BJ (cell line): ENCODE measurements at regions of chr3 and their contacts with region 1.

Region 1: GRCh38 chr3:36700537-36701248 is 63.7 kb downstream of the DCLK3 start:
- DNase-seq: no peak
- H3K4me3 ChIP-seq: no peak overlapping the region
- H3K27me3 ChIP-seq: no peaks in the 10 kb centered on the region
- CTCF ChIP-seq: peak; percentile 90

Region 2: GRCh38 chr3:35965908-35966307 is 734.8 kb before region 1 on chr3:
- CTCF ChIA-PET with region 1: interaction called, 17 read pairs
- POLR2A ChIA-PET with region 1: interaction called, 14 read pairs
- DNase-seq: no peak
- H3K4me3 ChIP-seq: no peak overlapping the region
- H3K27me3 ChIP-seq: no peaks in the 10 kb centered on the region
- CTCF ChIP-seq: peak; percentile 58

Region 3: DNA sequence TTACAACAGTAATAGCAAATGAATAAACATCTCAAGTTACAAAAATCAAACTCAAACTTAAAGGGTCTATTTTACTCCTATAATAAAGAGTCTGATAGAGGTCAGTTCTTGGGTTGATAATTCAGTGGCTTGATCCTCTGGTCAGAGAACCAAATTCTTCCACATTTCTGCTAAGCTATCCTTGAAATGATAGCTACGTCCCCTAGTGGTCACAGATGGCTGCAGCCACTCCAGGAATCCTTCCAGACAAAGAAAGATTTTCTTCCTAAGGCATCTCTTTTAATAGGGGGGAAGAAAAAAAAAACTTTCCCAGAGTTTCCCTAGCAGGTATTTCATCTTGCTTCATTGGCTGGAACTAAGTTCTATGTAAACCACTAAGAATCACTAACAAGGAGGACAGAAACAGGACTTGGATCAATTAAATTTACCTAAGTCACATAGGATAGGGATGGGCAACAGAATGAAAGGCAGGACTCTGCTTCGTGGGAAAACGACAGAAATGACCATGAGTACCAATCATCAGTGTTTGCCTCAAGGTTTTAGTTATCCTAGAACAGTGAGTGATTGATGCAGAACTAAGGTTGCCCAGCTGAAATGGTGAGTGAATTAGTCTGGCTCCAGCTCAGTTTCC is 159.7 kb before region 1 on chr3:
- CTCF ChIA-PET with region 1: interaction called, 5 read pairs
- POLR2A ChIA-PET with region 1: interaction called, 14 read pairs
- DNase-seq: no peak
- H3K4me3 ChIP-seq: no peak overlapping the region
- H3K27me3 ChIP-seq: no peaks in the 10 kb centered on the region
- CTCF ChIP-seq: peak; percentile 92

Region 4: GRCh38 chr3:36591959-36592358 is 108.7 kb before region 1 on chr3:
- CTCF ChIA-PET with region 1: interaction called, 17 read pairs
- POLR2A ChIA-PET with region 1: no interaction called
- DNase-seq: no peak
- H3K4me3 ChIP-seq: no peak overlapping the region
- H3K27me3 ChIP-seq: no peaks in the 10 kb centered on the region
- CTCF ChIP-seq: peak; percentile 28; the same call in 1 of the 2 replicates